ENCODE measurements at regions of chr11 and their contacts with region 1.

Region 1: DNA sequence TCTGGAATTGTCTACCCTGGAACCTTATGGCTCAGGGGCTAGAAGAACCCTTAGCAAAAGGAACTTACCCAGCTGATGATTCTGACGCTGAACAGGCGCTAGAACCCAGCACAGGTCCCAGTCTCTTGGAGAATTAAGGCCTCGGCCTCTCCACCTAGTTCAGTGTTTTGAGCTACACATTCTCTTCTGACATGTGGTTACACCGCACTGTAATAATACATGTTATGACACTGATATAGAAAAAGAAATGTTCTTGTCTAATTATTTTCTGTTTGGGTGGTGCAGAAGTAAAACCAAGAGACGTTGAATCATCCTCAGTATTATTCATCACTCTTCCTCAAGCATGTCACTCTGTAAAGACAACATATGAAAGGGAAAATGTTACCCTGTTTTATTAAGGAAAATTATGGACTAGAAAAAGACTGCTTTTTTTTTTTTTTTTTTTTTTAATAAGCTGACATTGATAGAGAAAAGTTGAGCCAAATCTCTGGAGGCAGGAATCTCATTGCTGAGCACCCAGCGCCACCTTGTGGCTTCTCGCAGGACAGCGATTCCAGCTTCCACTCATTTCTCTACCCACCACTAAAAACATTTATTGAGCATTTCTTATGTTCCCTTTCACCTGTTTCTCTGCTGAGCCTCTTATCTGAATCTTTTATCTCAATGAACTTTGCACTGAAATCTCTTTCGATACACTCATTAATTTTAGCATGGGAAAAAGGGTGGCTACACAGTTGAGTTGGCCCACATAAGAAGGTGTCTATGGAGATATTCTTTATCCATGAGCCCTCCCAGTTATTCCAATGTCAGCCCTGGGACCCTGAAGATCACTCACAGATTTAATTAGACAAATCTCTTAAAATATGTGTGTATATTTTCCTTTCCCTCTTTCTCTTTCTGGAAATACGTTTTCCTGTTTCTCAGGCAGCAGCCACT is 12.6 kb upstream of the APLNR start:
- DNase-seq: no peak
- H3K4me3 ChIP-seq: no peak overlapping the region
- H3K27ac ChIP-seq: no peak overlapping the region
- H3K4me1 ChIP-seq: peaks cover 7% of the 10 kb centered on the region
- H3K27me3 ChIP-seq: no peaks in the 10 kb centered on the region
- CTCF ChIP-seq: peak; percentile 47 to 82 (median 67)
- POLR2A ChIP-seq: no peak

Region 2: DNA sequence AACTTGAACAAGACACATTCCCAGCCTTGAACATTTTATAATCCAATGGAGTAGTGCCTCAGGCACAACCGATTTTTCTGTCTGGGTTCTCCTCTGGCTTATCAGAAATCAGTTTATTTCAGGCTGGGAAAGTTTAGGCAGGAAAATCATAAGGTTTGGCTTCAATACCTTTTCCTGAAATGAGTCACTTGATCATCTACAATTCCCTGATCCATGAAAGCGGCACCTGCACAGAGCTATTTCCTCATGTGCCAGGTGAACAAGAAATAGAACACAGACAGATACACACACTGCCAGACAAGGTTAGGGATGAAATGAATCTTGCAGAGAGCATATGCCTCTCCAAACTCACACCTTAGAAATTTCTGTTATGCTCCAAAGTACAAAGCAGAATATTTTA is 394.4 kb before region 1 on chr11:
- intact Hi-C with region 1: loop called (anchors 10 kb)
- DNase-seq: no peak
- H3K4me3 ChIP-seq: no peak overlapping the region
- H3K27ac ChIP-seq: no peak overlapping the region
- H3K4me1 ChIP-seq: no peaks in the 10 kb centered on the region
- H3K27me3 ChIP-seq: no peaks in the 10 kb centered on the region
- CTCF ChIP-seq: no peak
- POLR2A ChIP-seq: no peak

Region 3: DNA sequence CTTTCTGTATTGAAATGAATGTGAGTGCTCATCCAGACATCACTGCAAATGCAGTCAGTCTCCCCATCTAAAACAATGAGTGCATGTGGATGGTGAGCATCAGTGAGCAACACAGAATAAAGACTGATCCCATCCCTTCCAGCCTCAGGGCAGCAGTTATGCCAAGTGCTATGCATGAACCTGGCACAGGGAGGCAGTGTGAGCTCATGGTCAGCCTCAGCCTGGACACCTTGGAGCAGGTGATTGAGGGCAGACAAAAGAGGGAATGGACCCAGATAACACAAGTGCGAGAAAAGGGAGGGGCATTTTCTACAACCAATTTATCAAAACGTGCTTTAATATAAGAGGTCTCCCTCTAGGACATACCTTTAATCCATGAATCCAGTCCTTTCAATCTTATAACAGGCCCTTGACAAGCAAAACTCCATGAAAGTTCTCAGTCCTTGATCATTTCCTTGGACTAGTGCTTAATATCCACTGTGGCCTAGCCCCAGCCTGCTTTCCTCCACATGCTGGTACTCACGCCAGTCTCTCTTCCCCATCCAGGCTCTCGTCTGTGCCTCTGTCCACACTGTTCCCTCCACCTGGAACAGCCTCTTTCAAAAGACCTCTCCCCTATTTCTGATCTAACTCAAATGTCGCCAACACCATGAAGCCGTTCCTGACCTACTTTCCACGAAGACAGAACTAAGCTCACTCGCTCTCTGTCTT is 118.4 kb before region 1 on chr11:
- intact Hi-C with region 1: loop called (anchors 10 kb)
- DNase-seq: no peak
- H3K4me3 ChIP-seq: no peak overlapping the region
- H3K27ac ChIP-seq: no peak overlapping the region
- H3K4me1 ChIP-seq: no peaks in the 10 kb centered on the region
- H3K27me3 ChIP-seq: no peaks in the 10 kb centered on the region
- CTCF ChIP-seq: peak in 2 of 3 experiments; percentile 30
- POLR2A ChIP-seq: no peak

Region 4: DNA sequence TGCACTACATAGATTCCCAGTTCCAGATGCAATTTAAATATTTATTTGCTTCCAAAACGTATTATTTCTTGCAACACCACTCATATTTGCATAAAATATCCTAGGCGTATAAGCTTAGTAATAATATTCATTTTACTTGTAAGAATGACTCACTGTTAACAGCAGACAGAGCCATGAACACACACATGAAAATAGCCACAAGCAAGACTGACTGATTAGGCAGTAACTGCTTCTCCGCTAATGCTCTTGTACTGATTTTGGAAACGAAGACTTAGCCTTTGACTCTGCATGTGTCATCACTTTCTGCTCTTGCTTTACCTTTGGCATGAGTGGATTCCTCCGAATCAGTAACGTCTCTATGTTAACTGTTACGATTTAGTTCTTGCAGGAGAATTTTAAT is 973.1 kb after region 1 on chr11:
- intact Hi-C with region 1: loop called (anchors 5 kb)
- DNase-seq: no peak
- H3K4me3 ChIP-seq: no peak overlapping the region
- H3K27ac ChIP-seq: no peak overlapping the region
- H3K4me1 ChIP-seq: no peaks in the 10 kb centered on the region
- H3K27me3 ChIP-seq: no peaks in the 10 kb centered on the region
- CTCF ChIP-seq: no peak
- POLR2A ChIP-seq: no peak

Measured in vagina (tissue), 2 donors.